ENCODE measurements at regions of chr12 and their contacts with region 1.

Region 1: DNA sequence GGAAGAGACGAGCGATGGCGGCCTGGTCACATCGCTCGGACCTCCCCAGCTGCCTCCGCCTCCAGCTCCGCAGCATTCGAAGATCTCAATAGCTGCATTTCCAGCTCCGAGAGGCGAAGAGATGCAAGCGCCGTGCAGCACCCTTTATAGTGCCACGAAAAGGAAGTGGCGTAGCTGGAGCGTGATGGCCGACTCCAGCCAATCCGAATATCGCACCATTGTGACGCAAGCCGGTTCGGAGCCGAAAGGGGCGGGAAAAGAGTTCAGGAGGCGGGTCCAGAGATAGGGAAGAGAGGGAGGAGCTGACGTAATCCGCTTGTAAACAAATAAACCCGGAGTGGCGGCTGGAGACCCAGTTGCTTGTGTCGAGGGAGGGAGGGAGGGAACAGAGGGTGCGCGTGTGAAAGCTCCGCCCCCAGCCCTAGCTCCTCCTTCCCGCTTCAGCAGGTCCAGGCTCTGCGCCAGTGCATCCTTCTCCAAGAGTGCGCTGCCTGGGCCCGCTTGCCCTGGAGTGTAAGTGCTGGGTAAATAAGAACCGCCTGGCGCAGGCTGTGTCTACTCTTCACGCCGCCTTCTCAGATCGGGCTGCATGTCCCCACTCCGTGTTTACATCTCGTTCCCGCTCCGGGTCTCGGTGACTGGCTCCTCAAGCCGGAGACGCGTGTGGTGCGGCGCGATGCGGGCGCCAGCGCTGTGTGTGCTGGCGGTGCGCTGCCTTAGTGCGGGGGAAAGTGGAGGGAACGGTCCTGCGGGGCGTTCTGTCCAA is at the start of gene BTG1:
- DNase-seq: peak; percentile 98
- ATAC-seq: peak; percentile 91
- total RNA-seq, gene BTG1: 66.9 TPM

Region 2: GRCh38 chr12:91577586-91578539 is 568.1 kb before region 1 on chr12:
- intact Hi-C with region 1: loop called (anchors 5 kb)
- DNase-seq: no peak
- ATAC-seq: peak; percentile 50

Region 3: GRCh38 chr12:91985002-91985787 is 160.7 kb before region 1 on chr12:
- intact Hi-C with region 1: loop called (anchors 5 kb)
- DNase-seq: no peak
- ATAC-seq: no peak

Region 4: DNA sequence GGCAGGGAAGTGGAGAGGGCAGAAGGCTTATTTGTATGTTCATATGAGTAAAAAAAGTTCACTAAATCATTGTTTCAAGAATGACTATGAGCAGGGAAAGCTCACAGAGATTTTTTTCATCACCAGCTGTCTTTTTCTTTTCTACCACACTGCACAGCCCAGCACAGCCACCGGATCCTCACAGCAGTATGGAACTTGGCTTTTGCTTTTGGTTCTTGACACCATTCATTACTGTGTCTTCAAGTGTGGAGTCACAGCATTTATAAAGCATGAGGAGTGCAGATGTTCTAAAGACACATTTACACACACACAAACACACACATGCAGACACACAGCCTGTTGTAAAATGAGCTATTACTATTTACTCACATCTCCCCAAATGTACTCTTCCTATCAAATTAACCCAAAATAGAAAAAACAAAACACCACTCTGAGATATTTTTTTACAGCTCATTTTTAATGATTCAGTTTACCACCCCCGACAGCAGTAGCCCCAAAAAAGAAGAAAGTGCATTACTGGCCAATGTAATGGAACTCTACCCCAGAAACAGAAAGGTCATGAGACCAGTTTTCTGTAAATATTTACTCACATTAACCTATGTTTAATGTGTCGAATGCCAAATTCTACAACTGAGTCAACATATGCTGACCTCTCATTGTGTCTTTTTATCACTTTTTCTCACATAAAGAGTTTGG is 60.7 kb before region 1 on chr12:
- intact Hi-C with region 1: no loop called
- DNase-seq: no peak
- ATAC-seq: no peak

Region 5: DNA sequence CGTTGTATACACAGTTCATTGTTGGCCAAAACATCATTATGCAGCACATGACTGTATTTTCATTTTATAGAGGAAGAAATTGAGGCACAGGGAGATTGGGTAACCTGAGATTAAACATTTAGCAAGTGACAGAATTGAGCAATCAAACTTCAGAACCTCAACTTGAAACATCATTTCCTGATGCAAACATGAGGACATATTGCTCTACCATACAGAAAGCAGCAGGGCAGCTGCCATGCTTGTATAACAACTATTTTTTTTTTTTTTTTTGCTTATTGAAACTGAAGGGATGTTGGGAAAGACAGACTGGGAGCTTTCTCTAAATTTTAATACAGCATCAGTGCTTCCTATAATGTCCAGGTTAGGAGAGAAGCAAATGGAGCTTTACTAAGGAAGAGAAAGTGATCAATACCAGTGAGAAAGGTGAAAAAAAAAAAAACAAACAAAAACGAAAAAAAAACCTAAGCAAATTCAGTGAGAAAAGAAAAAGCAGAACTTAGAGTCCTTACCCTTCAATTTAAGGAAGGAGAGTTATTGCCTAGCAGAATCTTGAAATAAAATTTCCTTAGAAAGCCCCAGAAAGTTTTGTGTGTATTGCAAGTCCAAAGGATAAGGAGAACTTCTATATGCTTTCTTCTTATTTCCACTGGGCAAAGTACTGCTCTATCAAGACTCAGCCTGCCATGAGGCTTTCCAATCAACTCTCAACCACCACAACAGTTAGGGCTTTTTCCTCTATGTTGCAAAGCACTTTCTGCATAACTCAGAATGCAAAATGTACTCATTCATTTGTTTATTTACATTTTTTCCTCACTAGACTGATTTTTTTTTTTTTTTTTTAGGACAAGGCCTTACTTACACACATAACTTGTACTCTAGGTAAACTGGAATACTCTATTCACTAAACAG is 21.9 kb before region 1 on chr12:
- intact Hi-C with region 1: no loop called
- DNase-seq: no peak
- ATAC-seq: no peak

Region 6: GRCh38 chr12:92244036-92244435 is 98.1 kb after region 1 on chr12:
- intact Hi-C with region 1: loop called (anchors 2 kb)
- DNase-seq: no peak
- ATAC-seq: peak; percentile 91

Region 7: GRCh38 chr12:92505254-92506231 is 359.6 kb after region 1 on chr12:
- intact Hi-C with region 1: loop called (anchors 5 kb)
- DNase-seq: peak; percentile 78
- ATAC-seq: peak; percentile 55

Region 8: DNA sequence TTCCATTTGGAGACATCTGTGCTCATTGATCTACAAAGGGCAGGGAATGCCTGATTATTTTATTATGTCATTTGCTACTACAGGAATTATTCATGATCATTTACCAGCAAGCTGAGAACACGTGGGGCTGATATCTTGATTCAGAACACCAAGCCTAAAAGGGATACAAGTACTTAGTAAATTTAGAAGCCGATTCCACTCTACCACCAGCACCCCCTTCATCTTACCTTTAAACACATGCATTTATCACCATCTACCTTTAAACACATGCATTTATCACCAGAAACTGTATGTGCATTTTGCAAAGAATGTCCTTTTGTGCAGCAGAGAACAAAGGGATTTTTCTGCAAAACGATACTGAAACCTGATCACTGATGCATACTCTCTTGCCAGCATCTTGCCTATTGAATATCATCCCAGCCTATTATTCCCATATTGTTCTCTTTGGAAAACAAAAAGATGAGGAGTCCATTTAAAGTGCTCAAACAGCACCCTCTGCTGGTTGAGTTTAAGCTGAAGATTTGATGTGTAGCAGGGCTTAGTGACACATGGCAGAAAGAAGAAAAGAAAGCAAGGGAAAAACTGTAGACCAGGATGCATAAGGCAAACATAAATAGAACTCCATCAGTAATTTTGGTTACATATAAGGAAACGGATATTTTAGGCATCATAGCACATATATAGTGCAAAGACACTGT is 424.3 kb after region 1 on chr12:
- intact Hi-C with region 1: loop called (anchors 2 kb)
- DNase-seq: no peak
- ATAC-seq: peak; percentile 79

Measured in Right ventricle myocardium inferior (tissue), 1 donor.